PC-3 (cell line): ENCODE measurements at regions of chr11 and their contacts with region 1.

Region 1: GRCh38 chr11:615504-616319 is at the start of gene IRF7:
- DNase-seq: peak; percentile 89
- ATAC-seq: peak; percentile 73
- H3K4me3 ChIP-seq: peak within 1 kb of the TSS; percentile 79
- H3K27ac ChIP-seq: peak within 1 kb of the TSS; percentile 67
- H3K4me1 ChIP-seq: peaks cover 28% of the 10 kb centered on the region
- H3K27me3 ChIP-seq: no peaks in the 10 kb centered on the region
- CTCF ChIP-seq: no peak
- total RNA-seq, gene IRF7: 80.8 and 95.7 TPM in 2 replicates

Region 2: GRCh38 chr11:568306-569157 is 47.2 kb before region 1 on chr11:
- CTCF ChIA-PET with region 1: no interaction called
- POLR2A ChIA-PET with region 1: no interaction called
- intact Hi-C with region 1: loop called (anchors 10 kb)
- DNase-seq: peak; percentile 96
- ATAC-seq: peak; percentile 90
- H3K4me3 ChIP-seq: peak overlapping the region; percentile 80
- H3K27ac ChIP-seq: no peak overlapping the region
- H3K4me1 ChIP-seq: peaks cover 23% of the 10 kb centered on the region; the same call in 1 of the 2 replicates
- H3K27me3 ChIP-seq: no peaks in the 10 kb centered on the region
- CTCF ChIP-seq: no peak

Region 3: GRCh38 chr11:587978-588380 is 27.7 kb before region 1 on chr11:
- CTCF ChIA-PET with region 1: no interaction called
- POLR2A ChIA-PET with region 1: interaction called, 16 read pairs
- intact Hi-C with region 1: no loop called
- DNase-seq: no peak
- ATAC-seq: no peak; the same call in 1 of the 2 replicates
- H3K4me3 ChIP-seq: no peak overlapping the region
- H3K27ac ChIP-seq: no peak overlapping the region
- H3K4me1 ChIP-seq: no peaks in the 10 kb centered on the region
- H3K27me3 ChIP-seq: no peaks in the 10 kb centered on the region
- CTCF ChIP-seq: no peak

Region 4: DNA sequence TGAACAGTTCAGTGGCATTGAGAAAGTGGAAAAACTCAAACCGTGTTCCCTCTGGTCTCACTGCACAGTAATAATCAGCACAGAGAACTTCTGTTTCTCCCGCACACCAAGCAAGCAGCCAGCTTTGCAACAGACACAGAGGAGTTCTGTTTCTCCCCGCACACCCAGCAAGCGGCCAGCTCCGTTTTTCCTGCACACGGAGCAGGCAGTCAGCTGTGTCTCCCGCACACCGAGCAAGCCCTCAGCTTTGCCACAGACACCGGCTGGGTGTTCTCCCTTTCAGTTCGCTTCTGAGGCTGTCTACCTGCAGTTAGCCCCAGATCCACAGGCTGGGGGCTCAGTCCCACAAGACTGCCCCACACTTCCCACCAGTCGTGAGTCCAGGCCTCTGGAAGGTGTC is 121.7 kb after region 1 on chr11:
- CTCF ChIA-PET with region 1: no interaction called
- POLR2A ChIA-PET with region 1: no interaction called
- intact Hi-C with region 1: no loop called
- DNase-seq: no peak
- ATAC-seq: no peak
- H3K4me3 ChIP-seq: no peak overlapping the region
- H3K27ac ChIP-seq: no peak overlapping the region
- H3K4me1 ChIP-seq: no peaks in the 10 kb centered on the region
- H3K27me3 ChIP-seq: no peaks in the 10 kb centered on the region
- CTCF ChIP-seq: no peak

Region 5: DNA sequence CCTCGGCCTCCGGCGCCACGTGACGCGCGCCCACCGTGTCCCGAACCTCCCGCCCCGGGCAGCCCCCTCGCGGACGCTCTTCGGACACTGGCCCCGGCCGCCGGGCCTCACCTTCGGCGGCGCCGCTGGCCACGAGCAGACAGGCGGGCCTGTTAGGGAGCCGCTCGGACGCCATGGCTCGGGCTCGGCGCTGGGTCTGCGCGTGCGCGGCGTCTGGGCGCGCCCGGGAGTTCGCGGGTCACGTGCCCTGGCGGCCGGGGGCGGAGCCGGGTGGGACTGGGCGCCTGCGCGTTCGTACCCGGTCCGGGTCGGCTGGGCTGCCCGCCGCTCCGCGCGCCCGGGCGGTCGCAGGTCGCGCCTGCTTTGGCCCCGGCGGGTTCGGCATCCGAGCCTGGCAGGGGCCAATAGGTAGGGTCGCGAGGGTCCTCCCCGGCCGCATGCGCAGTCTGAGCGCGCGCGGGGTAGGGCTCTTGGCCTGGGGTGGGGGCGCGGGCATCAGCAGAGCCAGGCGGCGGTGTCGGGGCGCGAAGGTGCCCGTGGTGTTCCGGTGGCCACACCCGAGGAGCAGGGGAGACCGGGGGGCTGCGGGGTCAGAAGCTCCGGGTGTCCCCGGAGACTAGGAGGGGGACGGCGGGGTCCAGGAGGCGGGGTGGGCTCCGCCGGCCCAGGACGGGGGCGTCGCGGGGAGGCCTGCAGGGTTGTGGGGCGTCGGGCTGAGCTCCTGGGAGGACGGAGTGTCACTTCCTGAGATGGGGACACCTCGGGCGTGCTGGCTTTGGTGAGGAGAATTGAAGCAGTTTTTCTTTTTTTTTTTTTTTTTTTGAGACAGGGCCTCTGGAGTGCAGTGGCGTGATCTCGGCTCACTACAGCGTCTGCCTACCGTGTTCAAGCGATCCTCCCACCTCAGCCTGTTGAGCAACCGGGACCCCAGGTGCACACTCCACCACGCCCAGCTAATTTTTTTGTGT is 161.9 kb after region 1 on chr11 and contains the start of gene GATD1:
- CTCF ChIA-PET with region 1: no interaction called
- POLR2A ChIA-PET with region 1: interaction called, 11 read pairs
- intact Hi-C with region 1: no loop called
- DNase-seq: peak; percentile 86
- ATAC-seq: peak; percentile 72
- H3K4me3 ChIP-seq: peak within 1 kb of the TSS; percentile 95
- H3K27ac ChIP-seq: peak within 1 kb of the TSS; percentile 40
- H3K4me1 ChIP-seq: peaks cover 22% of the 10 kb centered on the region
- H3K27me3 ChIP-seq: no peaks in the 10 kb centered on the region
- CTCF ChIP-seq: no peak
- total RNA-seq, gene GATD1: 38.9 and 39.7 TPM in 2 replicates